ENCODE measurements at regions of chr1 and their contacts with region 1.

Region 1: GRCh38 chr1:158496374-158496773 is 24.4 kb downstream of the OR10R2 start:
- DNase-seq: no peak

Region 2: GRCh38 chr1:157963713-157964112 is 532.7 kb before region 1 on chr1:
- intact Hi-C with region 1: loop called (anchors 10 kb)
- DNase-seq: no peak